OCI-LY7 (cell line): ENCODE measurements at regions of chr22 and their contacts with region 1.

Region 1: DNA sequence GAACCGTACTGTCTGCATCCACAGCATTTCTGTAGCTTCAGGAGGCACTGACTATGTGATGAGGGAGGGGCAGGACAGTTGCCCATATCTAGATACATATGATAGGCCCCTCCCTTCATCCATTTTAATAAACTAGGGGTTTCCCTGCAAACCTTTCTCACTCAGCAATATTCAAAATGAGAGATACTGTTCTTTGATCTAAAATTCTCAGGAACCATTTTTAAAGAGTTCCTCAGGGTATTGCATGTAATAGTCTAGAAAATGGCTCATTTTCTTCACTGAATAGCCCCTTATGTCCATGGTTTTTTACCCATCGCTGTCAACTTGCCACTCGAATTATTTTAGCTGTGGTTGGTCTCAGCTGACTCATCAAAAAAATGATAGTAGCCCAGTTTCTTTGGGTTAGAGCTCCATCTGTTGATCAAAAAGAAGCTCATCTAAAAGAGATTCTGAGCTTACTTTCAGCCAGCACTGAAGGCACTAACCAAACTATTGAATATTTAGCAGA is 37.0 kb upstream of the DNAJB7 start:
- DNase-seq: peak; percentile 73
- H3K4me3 ChIP-seq: no peak overlapping the region
- H3K27ac ChIP-seq: no peak overlapping the region
- H3K4me1 ChIP-seq: peaks cover 4% of the 10 kb centered on the region
- CTCF ChIP-seq: peak; percentile 87

Region 2: DNA sequence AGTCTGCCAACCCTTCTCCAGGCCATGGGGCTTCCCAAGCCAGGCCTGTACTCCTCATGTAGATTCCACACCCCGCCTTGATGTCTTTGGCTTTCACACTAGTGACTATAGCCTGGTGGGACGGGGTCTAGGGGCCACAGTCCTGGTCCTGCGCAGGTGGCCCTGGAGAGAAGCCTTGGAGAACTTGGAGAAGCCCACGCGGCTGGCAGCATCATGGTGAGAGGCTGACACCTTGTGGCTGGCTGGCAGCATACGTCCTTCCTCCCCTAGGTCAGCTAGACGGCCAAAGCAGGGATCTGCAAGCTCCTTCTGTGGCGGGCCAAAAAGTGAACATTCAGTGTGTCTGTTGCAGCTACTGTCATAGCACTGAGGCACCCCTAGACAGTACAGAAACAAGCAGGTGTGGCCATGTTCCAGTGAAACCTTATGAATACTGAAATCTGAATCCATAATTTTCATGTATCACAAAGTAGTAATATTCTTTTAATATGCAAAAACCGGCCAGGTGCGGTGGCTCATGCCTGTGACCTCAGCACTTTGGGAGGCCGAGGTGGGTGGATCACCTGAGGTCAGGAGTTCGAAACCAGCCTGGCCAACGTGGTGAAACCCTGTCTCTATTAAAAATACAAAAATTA is 862.2 kb before region 1 on chr22:
- CTCF ChIA-PET with region 1: no interaction called
- POLR2A ChIA-PET with region 1: no interaction called
- intact Hi-C with region 1: loop called (anchors 5 kb)
- DNase-seq: peak; percentile 85
- H3K4me3 ChIP-seq: no peak overlapping the region
- H3K27ac ChIP-seq: no peak overlapping the region
- H3K4me1 ChIP-seq: peaks cover 3% of the 10 kb centered on the region
- CTCF ChIP-seq: peak; percentile 92

Region 3: DNA sequence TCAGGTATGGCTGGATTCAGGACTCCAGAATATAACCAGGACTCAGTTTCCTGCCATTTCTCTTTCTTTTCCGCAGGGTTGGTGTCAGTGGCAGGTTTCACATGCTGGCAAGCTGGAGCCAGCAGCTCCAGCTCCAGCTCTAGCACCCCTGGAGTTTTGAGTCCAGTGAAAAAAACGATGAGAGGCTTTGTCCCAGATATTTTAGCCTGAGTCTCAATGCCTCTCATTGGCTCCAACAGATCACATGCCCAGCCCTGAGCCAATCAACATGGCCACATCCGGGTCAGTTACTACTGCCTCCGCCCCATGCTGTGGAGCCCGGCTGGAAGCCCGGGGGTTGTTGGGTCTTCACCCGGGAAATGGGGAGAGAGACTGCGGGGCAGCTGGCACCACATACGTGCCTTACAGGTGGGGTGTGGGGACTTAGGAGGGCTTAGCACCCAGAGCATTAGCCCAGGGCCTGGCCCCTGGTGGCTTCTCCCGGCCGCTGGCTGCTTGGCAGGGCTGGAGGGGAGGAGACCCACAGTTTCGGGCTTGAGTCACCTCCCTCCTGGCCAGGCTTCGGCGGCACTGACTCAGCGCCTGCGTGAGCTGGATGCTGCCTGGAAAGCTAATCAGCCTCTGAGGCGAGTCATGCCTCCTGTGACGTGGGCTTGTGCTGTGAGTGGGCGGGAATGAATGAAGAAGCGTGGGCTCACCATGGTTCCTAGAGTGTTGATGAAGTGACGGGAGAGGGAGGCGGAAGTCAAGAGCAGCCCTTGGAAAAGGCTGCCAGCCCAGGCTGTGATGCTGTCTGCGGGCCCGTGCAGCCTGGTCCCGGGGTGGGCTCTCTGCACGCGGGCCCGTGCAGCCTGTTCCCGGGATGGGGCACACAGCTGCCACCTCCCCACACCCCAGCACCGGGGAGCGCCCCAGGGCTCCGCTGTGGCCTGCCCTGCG is 247.1 kb before region 1 on chr22:
- CTCF ChIA-PET with region 1: no interaction called
- POLR2A ChIA-PET with region 1: no interaction called
- intact Hi-C with region 1: loop called (anchors 2 kb)
- DNase-seq: peak; percentile 93
- H3K4me3 ChIP-seq: peak overlapping the region; percentile 79
- H3K27ac ChIP-seq: peak overlapping the region; percentile 54
- H3K4me1 ChIP-seq: peaks cover 31% of the 10 kb centered on the region
- CTCF ChIP-seq: no peak

Region 4: DNA sequence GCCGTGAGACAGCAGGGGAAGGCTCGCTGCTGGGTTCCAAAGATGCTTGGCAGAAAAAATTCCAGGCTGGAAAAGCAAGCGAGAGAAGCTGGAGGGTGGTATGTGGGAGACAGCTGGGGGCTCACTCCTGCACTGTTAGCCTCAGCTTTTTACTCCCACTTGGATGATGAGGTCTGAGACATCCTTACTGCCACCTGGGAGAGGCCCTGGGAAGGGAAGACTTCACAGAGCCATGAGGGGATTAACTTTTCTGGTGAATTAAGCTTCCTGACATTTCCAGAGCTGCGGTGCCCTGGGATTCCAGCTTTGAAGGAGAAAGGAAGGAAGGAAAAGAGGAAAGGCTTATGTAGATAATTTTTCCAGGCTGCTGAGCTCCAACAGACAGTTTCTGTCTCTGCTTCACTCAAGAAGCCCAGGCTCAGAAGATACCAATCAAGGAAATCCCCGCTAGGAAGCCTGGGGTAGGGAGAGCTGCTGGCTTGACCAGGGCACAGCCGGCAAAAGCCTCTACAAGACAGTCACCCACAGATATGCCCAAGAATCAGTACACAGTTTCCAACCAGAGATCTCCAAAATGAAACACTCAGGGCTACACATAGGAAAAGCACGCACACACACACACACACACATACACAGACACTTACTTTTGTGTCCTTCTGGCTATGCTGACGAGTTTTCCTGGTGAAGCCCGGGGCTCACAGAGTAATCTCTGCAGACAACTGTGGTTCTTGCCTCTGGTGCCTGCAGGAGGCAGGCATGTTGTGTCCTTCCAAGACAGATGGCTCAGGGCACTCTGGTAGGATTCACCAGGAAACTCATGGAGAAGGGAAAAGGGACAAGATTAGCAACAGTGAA is 218.7 kb before region 1 on chr22:
- CTCF ChIA-PET with region 1: interaction called, 3 read pairs
- POLR2A ChIA-PET with region 1: no interaction called
- intact Hi-C with region 1: loop called (anchors 2 kb)
- DNase-seq: no peak
- H3K4me3 ChIP-seq: no peak overlapping the region
- H3K27ac ChIP-seq: no peak overlapping the region
- H3K4me1 ChIP-seq: peaks cover 22% of the 10 kb centered on the region
- CTCF ChIP-seq: no peak